ENCODE measurements at regions of chr20 and their contacts with region 1.

Region 1: DNA sequence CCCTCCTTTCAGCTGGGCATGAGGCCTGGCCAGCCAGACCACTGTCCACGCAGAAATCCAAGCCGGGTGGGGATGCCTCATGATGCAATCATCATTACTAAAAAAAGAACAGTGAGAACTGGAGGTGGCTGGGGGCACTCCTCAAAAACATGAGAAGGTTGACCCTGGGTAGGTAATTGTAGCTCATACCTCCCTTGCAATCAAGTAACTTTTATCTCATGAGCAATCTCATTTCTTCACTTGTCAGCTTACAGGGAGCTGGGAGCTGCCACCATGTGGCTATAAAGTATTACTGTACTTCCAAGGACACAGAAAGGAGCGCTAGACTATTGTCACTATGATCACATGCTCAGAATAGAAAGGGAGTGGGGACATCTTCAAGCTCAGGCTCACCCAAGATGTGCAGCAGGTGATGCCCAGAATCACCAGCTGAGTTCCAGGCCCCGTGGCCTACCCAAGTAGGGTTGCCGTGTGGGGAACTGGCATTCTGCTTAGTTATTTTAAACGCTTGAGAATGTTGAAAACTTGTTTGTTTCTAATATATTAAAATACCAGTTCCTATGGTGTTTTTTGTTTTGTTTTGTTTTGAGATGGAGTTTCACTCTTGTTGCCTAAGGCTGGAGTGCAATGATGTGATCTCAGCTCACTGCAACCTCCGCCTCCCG is 3.0 kb upstream of the CDH26 start:
- DNase-seq: peak in 1 of 9 experiments; percentile 23
- ATAC-seq: no peak
- H3K4me3 ChIP-seq: no peak overlapping the region
- H3K4me3 Mint-ChIP-seq: no peak overlapping the region
- H3K27ac ChIP-seq: no peak overlapping the region
- H3K27ac Mint-ChIP-seq: no peak overlapping the region
- H3K4me1 ChIP-seq: no peaks in the 10 kb centered on the region
- H3K4me1 Mint-ChIP-seq: no peaks in the 10 kb centered on the region
- H3K27me3 ChIP-seq: no peaks in the 10 kb centered on the region
- H3K27me3 Mint-ChIP-seq: no peaks in the 10 kb centered on the region
- CTCF ChIP-seq: no peak

Region 2: DNA sequence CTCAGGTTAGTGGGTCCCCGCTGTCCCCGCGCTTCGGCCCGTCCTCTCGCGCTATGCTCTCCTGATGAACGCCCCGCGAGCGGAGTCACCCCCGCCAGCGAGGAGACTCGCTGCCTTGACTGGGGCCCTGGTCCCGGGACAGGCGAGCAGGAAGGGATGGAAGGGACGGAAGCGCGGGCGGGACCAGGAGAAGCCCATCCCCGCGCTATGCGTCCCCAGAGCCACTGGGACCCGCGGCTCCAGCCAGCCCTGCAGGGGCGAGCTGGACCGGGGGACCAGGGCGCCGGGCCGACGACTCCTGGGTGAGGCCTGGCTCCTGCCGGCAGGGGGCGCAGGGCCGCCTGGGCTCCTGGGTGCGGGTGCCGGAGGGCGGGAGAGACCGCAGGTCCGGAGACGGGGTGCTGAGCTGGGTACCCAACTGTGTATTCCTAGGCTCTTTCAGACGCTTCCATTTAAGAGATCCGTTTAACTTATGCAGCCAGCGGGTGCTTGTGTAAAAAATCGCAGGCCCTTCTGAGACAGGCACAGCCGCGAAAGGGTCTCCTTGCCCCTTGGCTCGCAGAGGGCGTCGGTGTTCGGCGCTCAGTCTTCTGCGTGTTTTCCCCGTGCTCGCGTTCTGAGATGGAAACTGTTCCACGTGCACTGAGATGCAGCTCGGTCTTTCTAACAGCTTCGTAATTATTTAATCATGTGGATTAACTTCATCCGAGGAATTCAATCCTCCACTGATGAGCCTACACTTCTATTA is 21.2 kb before region 1 on chr20:
- CTCF ChIA-PET with region 1: interaction called, 14 read pairs
- POLR2A ChIA-PET with region 1: interaction called, 12 read pairs
- intact Hi-C with region 1: no loop called
- DNase-seq: peak; percentile 60 to 87 (median 79)
- ATAC-seq: peak; percentile 73
- H3K4me3 ChIP-seq: peak overlapping the region; percentile 65 to 85
- H3K4me3 Mint-ChIP-seq: peak overlapping the region; percentile 79
- H3K27ac ChIP-seq: peak overlapping the region; percentile 32 to 68
- H3K27ac Mint-ChIP-seq: peak overlapping the region; percentile 57
- H3K4me1 ChIP-seq: peaks cover 12% of the 10 kb centered on the region
- H3K4me1 Mint-ChIP-seq: peaks cover 26% of the 10 kb centered on the region
- H3K27me3 ChIP-seq: no peaks in the 10 kb centered on the region
- H3K27me3 Mint-ChIP-seq: no peaks in the 10 kb centered on the region
- CTCF ChIP-seq: peak; percentile 94

Region 3: GRCh38 chr20:59940174-59940971 is 14.9 kb before region 1 on chr20 and contains the starts of genes FAM217B and PPP1R3D:
- CTCF ChIA-PET with region 1: interaction called, 4 read pairs
- POLR2A ChIA-PET with region 1: interaction called, 14 read pairs
- intact Hi-C with region 1: no loop called
- DNase-seq: peak; percentile 74 to 94 (median 88)
- ATAC-seq: peak; percentile 96
- H3K4me3 ChIP-seq: peak within 1 kb of the TSS; percentile 94 to 97
- H3K4me3 Mint-ChIP-seq: peak within 1 kb of the TSS; percentile 96
- H3K27ac ChIP-seq: peak within 1 kb of the TSS; percentile 90 to 91
- H3K27ac Mint-ChIP-seq: peak within 1 kb of the TSS; percentile 96
- H3K4me1 ChIP-seq: peaks cover 22% of the 10 kb centered on the region
- H3K4me1 Mint-ChIP-seq: peaks cover 45% of the 10 kb centered on the region
- H3K27me3 ChIP-seq: no peaks in the 10 kb centered on the region
- H3K27me3 Mint-ChIP-seq: no peaks in the 10 kb centered on the region
- CTCF ChIP-seq: no peak
- total RNA-seq, gene FAM217B: 10.1 to 13.5 TPM
- total RNA-seq, gene PPP1R3D: 3.9 to 4.5 TPM

Region 4: GRCh38 chr20:60062811-60063451 is 107.7 kb after region 1 on chr20:
- CTCF ChIA-PET with region 1: no interaction called
- POLR2A ChIA-PET with region 1: no interaction called
- intact Hi-C with region 1: no loop called
- DNase-seq: no peak
- ATAC-seq: no peak
- H3K4me3 ChIP-seq: no peak overlapping the region
- H3K4me3 Mint-ChIP-seq: no peak overlapping the region
- H3K27ac ChIP-seq: no peak overlapping the region
- H3K27ac Mint-ChIP-seq: no peak overlapping the region
- H3K4me1 ChIP-seq: peaks cover 20% of the 10 kb centered on the region
- H3K4me1 Mint-ChIP-seq: peaks cover 26% of the 10 kb centered on the region
- H3K27me3 ChIP-seq: no peaks in the 10 kb centered on the region
- H3K27me3 Mint-ChIP-seq: no peaks in the 10 kb centered on the region
- CTCF ChIP-seq: no peak

Region 5: DNA sequence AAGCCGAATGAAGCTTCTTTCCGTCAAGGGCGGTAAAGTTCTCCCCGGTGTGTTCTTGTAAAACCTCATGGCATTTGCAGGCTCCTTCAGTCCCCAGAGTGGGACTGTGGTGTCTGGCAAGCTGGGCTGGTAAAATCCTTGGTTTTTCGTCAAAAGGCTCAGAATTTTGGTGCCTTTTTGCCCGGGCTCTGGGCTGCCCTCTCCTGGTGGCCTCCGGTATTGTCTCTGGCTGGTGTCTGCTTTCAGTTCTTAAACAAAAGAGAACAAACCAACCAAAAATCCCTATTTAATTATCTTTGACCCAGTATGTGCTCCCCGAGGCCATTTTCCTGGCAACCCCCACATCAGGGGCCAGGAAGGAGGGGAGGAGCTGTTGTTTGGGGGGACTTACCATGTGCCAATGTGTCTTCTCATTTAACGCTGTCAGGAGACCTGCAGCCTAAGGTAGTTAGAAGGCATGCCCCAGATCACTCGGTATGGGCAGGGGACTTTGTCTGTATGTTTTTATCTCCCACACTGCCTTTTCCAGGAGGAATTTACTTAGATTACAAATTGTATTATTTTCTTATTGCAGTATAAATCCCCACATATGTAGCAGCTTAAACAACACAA is 1307.9 kb after region 1 on chr20:
- CTCF ChIA-PET with region 1: no interaction called
- POLR2A ChIA-PET with region 1: no interaction called
- intact Hi-C with region 1: loop called in 1 of 2 experiments (anchors 10 kb)
- DNase-seq: peak in 6 of 9 experiments; percentile 10 to 51 (median 14)
- ATAC-seq: no peak
- H3K4me3 ChIP-seq: no peak overlapping the region
- H3K4me3 Mint-ChIP-seq: no peak overlapping the region
- H3K27ac ChIP-seq: no peak overlapping the region
- H3K27ac Mint-ChIP-seq: no peak overlapping the region
- H3K4me1 ChIP-seq: no peaks in the 10 kb centered on the region
- H3K4me1 Mint-ChIP-seq: no peaks in the 10 kb centered on the region
- H3K27me3 ChIP-seq: no peaks in the 10 kb centered on the region
- H3K27me3 Mint-ChIP-seq: peaks cover 17% of the 10 kb centered on the region
- CTCF ChIP-seq: peak; percentile 54